B cell (primary cell): ENCODE measurements at regions of chr12 and their contacts with region 1.

Region 1: DNA sequence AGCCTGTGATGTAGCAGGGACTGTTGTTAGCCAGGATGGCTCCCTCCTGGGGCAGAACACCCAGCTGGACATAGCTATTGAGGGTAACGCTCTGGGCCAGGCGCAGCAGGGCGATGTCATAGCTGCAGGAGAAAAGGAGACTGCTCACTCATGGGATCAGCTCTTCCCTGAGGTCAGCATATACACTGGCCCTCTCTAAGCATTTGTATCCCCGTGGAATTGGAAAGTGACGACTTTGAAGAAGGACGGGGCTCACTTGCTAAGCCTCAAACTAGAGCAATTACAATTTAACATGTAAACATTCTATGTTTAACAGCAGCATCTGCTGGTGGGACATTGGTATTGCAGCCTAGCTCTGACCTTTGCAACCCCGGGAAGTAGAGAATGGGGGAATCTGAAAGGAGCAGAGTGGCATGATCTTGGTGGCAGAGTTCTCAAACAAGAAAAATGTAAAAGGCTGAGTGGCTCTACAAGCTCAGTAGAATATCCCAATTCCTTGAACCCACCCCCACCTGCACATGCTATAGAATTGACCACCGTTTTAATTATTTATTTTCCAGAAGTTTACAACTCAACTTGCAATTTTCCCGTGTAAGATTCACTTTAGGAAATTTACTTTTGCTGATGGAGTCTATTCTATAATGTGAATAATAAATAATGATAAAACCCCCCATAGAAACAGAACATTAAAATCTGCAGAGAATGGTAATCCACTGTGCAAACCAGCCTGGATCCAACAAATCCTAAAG is 5.0 kb downstream of the CELA1 start:
- DNase-seq: peak; percentile 85
- ATAC-seq: peak; percentile 86
- H3K4me3 ChIP-seq: no peak overlapping the region
- H3K4me3 Mint-ChIP-seq: peak overlapping the region; percentile 42
- H3K27ac ChIP-seq: no peak overlapping the region
- H3K27ac Mint-ChIP-seq: peak overlapping the region; percentile 43
- H3K4me1 ChIP-seq: peaks cover 42 to 45% of the 10 kb centered on the region in 2 donors
- H3K4me1 Mint-ChIP-seq: peaks cover 43% of the 10 kb centered on the region
- H3K27me3 ChIP-seq: no peaks in the 10 kb centered on the region
- H3K27me3 Mint-ChIP-seq: no peaks in the 10 kb centered on the region
- CTCF ChIP-seq: peak; percentile 99

Region 2: GRCh38 chr12:50825372-50825838 is 516.0 kb before region 1 on chr12:
- CTCF ChIA-PET with region 1: interaction called, 7 read pairs
- POLR2A ChIA-PET with region 1: no interaction called
- intact Hi-C with region 1: loop called (anchors 2 kb)
- DNase-seq: peak; percentile 76
- ATAC-seq: peak; percentile 73
- H3K4me3 ChIP-seq: no peak overlapping the region
- H3K4me3 Mint-ChIP-seq: peak overlapping the region; percentile 27
- H3K27ac ChIP-seq: peak overlapping the region; percentile 2 to 72
- H3K27ac Mint-ChIP-seq: peak overlapping the region; percentile 62
- H3K4me1 ChIP-seq: peaks cover 3% of the 10 kb centered on the region in 2 donors
- H3K4me1 Mint-ChIP-seq: peaks cover 6% of the 10 kb centered on the region
- H3K27me3 ChIP-seq: no peaks in the 10 kb centered on the region
- H3K27me3 Mint-ChIP-seq: no peaks in the 10 kb centered on the region
- CTCF ChIP-seq: peak; percentile 76

Region 3: DNA sequence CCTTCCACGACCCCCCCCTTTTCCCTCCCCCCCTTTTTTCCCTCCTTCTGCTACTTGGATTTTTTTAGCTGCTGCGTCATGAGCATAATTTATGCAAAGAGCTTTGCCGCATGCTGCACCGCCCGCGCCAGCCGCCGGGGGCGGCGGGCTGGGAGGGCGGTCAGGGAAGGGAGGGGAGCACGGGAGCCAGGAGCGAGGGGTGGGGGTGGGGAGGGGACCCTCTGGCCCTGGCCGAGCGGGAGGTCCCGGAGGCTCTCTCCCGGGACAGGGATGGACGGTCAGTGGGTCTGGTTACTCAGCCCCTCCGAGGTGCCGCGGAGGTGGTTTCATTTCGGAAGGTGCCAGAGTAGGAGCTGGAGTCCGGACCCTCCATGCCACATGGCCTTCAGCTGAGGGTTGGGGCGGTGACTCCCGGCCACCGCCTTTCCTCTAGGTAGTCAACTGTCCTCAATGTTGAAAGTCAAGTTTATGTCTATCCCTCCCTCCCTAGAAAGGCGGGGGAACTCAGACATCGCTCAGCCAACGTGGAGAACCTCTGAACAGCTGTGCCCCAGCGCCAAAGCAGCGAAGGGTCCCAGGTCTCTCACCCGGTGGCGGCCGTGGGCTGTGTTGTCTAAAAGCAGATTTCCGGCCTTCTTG is 123.3 kb before region 1 on chr12 and contains the start of gene POU6F1:
- CTCF ChIA-PET with region 1: interaction called, 18 read pairs
- POLR2A ChIA-PET with region 1: interaction called, 9 read pairs
- intact Hi-C with region 1: loop called (anchors 5 kb)
- DNase-seq: peak; percentile 87
- ATAC-seq: peak; percentile 72
- H3K4me3 ChIP-seq: peak within 1 kb of the TSS; percentile 68 to 86 (median 71)
- H3K4me3 Mint-ChIP-seq: peak within 1 kb of the TSS; percentile 95
- H3K27ac ChIP-seq: peak within 1 kb of the TSS; percentile 85 to 93
- H3K27ac Mint-ChIP-seq: peak within 1 kb of the TSS; percentile 96
- H3K4me1 ChIP-seq: peaks cover 6 to 18% of the 10 kb centered on the region in 2 donors
- H3K4me1 Mint-ChIP-seq: peaks cover 19% of the 10 kb centered on the region
- H3K27me3 ChIP-seq: no peaks in the 10 kb centered on the region
- H3K27me3 Mint-ChIP-seq: no peaks in the 10 kb centered on the region
- CTCF ChIP-seq: peak; percentile 69
- total RNA-seq, gene POU6F1: 57.5 and 62.6 TPM in 2 replicates

Region 4: GRCh38 chr12:51270067-51270970 is 71.1 kb before region 1 on chr12 and contains the start of gene SMAGP:
- CTCF ChIA-PET with region 1: interaction called, 127 read pairs
- POLR2A ChIA-PET with region 1: interaction called, 7 read pairs
- intact Hi-C with region 1: loop called (anchors 1 kb)
- DNase-seq: peak; percentile 79
- ATAC-seq: peak; percentile 75
- H3K4me3 ChIP-seq: peak within 1 kb of the TSS; percentile 52 to 86 (median 74)
- H3K4me3 Mint-ChIP-seq: peak within 1 kb of the TSS; percentile 95
- H3K27ac ChIP-seq: peak within 1 kb of the TSS; percentile 12 to 64
- H3K27ac Mint-ChIP-seq: peak within 1 kb of the TSS; percentile 91
- H3K4me1 ChIP-seq: peaks cover 19 to 20% of the 10 kb centered on the region in 2 donors
- H3K4me1 Mint-ChIP-seq: peaks cover 31% of the 10 kb centered on the region
- H3K27me3 ChIP-seq: no peaks in the 10 kb centered on the region
- H3K27me3 Mint-ChIP-seq: no peaks in the 10 kb centered on the region
- CTCF ChIP-seq: no peak
- total RNA-seq, gene SMAGP: 8.0 and 10.4 TPM in 2 replicates

Region 5: GRCh38 chr12:51326762-51327439 is 14.5 kb before region 1 on chr12:
- CTCF ChIA-PET with region 1: interaction called, 148 read pairs
- POLR2A ChIA-PET with region 1: interaction called, 5 read pairs
- intact Hi-C with region 1: loop called (anchors 1 kb)
- DNase-seq: peak; percentile 73
- ATAC-seq: peak; percentile 28
- H3K4me3 ChIP-seq: peak overlapping the region in 1 of 5 experiments; percentile 22
- H3K4me3 Mint-ChIP-seq: peak overlapping the region; percentile 35
- H3K27ac ChIP-seq: peak overlapping the region; percentile 59 to 64
- H3K27ac Mint-ChIP-seq: peak overlapping the region; percentile 83
- H3K4me1 ChIP-seq: peaks cover 72 to 79% of the 10 kb centered on the region in 2 donors
- H3K4me1 Mint-ChIP-seq: peaks cover 80% of the 10 kb centered on the region
- H3K27me3 ChIP-seq: no peaks in the 10 kb centered on the region
- H3K27me3 Mint-ChIP-seq: no peaks in the 10 kb centered on the region
- CTCF ChIP-seq: no peak

Region 6: GRCh38 chr12:51368640-51369517 is 27.4 kb after region 1 on chr12:
- CTCF ChIA-PET with region 1: interaction called, 16 read pairs
- POLR2A ChIA-PET with region 1: interaction called, 5 read pairs
- intact Hi-C with region 1: loop called (anchors 1 kb)
- DNase-seq: peak; percentile 98
- ATAC-seq: peak; percentile 96
- H3K4me3 ChIP-seq: peak overlapping the region in 4 of 5 experiments; percentile 14 to 44 (median 20)
- H3K4me3 Mint-ChIP-seq: peak overlapping the region; percentile 42
- H3K27ac ChIP-seq: peak overlapping the region; percentile 74 to 77
- H3K27ac Mint-ChIP-seq: peak overlapping the region; percentile 97
- H3K4me1 ChIP-seq: peaks cover 51 to 61% of the 10 kb centered on the region in 2 donors
- H3K4me1 Mint-ChIP-seq: peaks cover 54% of the 10 kb centered on the region
- H3K27me3 ChIP-seq: no peaks in the 10 kb centered on the region
- H3K27me3 Mint-ChIP-seq: no peaks in the 10 kb centered on the region
- CTCF ChIP-seq: no peak

Region 7: DNA sequence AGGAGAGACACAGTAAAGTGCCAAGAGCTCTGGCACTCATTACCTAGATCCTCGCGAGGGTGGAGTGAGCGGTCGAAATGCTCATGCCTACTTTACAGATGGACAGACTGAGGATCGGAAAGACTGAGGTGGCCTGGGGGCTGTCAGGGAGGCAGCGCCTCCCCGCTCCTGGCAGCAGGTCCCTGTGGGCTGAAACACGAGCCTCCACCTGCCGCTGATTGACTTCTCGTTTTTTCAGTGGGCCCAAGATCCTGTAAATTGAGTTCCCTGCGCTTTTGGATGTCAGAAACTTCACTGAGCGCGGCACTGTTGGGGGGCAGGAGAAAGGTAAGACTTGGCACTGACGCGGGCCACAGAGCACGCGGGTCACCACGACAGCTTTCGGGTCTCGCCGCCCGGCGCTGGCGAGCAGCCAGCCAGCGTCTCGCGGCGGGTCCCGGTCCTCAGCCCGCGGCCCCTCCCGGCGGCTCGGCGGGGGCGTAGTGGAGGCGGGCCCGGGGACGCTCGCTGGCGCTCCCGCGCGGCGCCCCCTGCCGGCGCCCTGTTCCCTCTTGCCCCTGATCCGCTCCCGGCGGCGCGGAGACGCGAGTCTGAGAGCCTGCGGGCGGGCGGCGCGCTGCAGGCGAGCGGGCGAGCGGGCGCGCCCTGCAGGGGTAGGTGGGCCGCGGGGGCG is 249.1 kb after region 1 on chr12:
- CTCF ChIA-PET with region 1: no interaction called
- POLR2A ChIA-PET with region 1: no interaction called
- intact Hi-C with region 1: no loop called
- DNase-seq: peak; percentile 84
- ATAC-seq: peak; percentile 88
- H3K4me3 ChIP-seq: peak overlapping the region; percentile 11 to 56 (median 50)
- H3K4me3 Mint-ChIP-seq: peak overlapping the region; percentile 90
- H3K27ac ChIP-seq: no peak overlapping the region
- H3K27ac Mint-ChIP-seq: peak overlapping the region; percentile 73
- H3K4me1 ChIP-seq: peaks cover 12 to 16% of the 10 kb centered on the region in 2 donors
- H3K4me1 Mint-ChIP-seq: peaks cover 19% of the 10 kb centered on the region
- H3K27me3 ChIP-seq: peaks cover 0 to 29% (median 26%) of the 10 kb centered on the region in 4 experiments
- H3K27me3 Mint-ChIP-seq: peaks cover 51% of the 10 kb centered on the region
- CTCF ChIP-seq: peak; percentile 58

Region 8: DNA sequence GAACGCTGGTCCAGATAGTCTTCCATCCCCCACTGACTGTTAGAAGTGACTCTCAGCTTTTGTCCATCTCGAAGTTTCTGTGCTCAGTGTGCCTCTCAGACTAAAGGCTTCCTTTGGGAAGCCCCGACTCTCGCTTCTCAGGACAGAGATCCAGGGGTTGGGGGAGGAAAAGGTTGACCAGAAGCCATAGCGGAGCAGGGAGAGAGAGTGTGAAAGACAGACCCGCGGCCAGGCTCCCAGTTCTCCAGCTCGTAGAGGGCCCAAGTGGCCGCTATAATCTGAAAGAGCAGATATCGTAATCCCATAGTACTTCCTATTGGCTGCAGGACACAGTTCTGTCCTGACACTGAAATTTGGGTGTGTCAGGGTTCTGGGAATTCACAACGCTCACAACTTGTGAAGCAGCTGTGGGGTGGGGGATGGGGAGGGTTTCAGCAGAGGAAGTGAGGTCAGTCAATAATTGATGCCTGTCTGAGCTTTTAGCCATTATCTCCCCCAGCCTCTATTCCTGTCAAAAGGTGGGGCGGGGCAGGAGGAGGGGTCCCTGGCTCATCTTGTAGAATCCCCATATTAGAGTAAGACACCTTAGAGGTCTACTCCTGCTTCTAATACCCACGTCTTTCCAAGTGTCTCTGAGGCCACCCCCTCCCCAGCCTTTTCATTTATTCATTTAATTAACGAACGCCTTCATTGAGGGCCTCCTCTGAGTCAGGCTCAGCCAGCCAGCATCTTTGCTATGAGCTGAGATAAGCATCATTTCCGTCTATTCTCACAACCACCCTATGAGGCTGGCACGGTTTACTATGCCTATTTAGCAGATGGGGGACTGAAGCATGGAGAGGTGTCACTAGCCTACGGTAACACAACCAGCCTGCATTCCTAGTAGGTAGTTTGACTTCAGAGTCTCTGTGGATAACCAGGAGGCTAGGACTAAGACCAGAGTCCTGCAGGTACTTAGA is 564.3 kb after region 1 on chr12:
- CTCF ChIA-PET with region 1: no interaction called
- POLR2A ChIA-PET with region 1: no interaction called
- intact Hi-C with region 1: no loop called
- DNase-seq: no peak
- ATAC-seq: no peak
- H3K4me3 ChIP-seq: no peak overlapping the region
- H3K4me3 Mint-ChIP-seq: no peak overlapping the region
- H3K27ac ChIP-seq: no peak overlapping the region
- H3K27ac Mint-ChIP-seq: no peak overlapping the region
- H3K4me1 ChIP-seq: peaks cover 0 to 10% of the 10 kb centered on the region in 2 donors
- H3K4me1 Mint-ChIP-seq: peaks cover 4% of the 10 kb centered on the region
- H3K27me3 ChIP-seq: peaks cover 0 to 23% (median 15%) of the 10 kb centered on the region in 4 experiments
- H3K27me3 Mint-ChIP-seq: peaks cover 37% of the 10 kb centered on the region
- CTCF ChIP-seq: no peak